Naive thymus-derived CD4-positive, alpha-beta T cell (primary cell): ENCODE measurements at regions of chr2 and their contacts with region 1.

Region 1: DNA sequence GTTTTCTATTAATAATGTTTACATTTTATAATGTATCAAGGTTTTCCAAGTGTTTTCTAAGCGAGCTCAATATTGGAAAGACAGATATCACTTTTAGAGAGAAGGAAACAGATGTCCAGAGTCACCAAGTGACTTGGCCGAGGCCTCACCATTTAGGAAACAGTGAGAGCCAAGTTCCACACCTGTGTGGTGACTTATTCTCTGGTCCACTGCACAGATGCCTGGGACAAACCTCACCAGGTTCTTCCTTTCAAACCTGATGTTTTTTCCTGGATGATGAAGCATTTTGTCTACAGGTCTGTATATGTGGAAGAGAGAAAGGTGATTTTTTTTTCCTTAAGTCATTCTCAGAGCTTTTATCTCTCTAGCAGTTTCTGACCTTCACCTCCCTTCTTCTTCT is 280.7 kb downstream of the LPIN1 start:
- DNase-seq: no peak
- ATAC-seq: no peak
- H3K4me3 ChIP-seq: no peak overlapping the region
- H3K4me3 Mint-ChIP-seq: no peak overlapping the region
- H3K27ac ChIP-seq: no peak overlapping the region
- H3K27ac Mint-ChIP-seq: no peak overlapping the region
- H3K4me1 ChIP-seq: no peaks in the 10 kb centered on the region
- H3K4me1 Mint-ChIP-seq: peaks cover 0 to 5% (median 2%) of the 10 kb centered on the region in 7 donors
- H3K27me3 ChIP-seq: no peaks in the 10 kb centered on the region
- H3K27me3 Mint-ChIP-seq: peaks cover 0 to 8% (median 0%) of the 10 kb centered on the region in 5 donors

Region 2: DNA sequence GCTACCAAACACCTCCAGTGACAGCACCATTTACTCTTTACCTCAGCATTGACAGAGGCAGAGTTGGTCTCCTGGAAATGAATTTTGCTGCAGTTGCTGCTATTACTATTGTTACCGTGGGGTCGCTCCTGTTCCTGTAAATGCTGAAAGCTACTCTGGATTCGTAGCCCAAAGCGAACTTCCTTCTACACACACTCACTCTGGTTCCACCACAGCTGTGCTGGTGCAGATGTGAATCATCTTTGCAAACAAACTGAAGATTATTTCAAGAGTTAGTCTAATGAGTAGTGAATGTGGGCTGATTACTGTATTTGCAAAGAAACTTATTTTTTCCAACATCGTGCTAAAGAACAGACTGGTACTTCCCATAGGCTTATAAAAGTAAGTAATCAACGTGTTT is 23.3 kb after region 1 on chr2:
- CTCF ChIA-PET with region 1: no interaction called
- POLR2A ChIA-PET with region 1: interaction called, 10 read pairs
- intact Hi-C with region 1: no loop called
- DNase-seq: peak in 1 of 9 donors; percentile 42
- ATAC-seq: peak; percentile 58
- H3K4me3 ChIP-seq: no peak overlapping the region
- H3K4me3 Mint-ChIP-seq: peak overlapping the region in 3 of 10 donors; percentile 4 to 64 (median 32)
- H3K27ac ChIP-seq: no peak overlapping the region
- H3K27ac Mint-ChIP-seq: peak overlapping the region in 2 of 9 donors; percentile 26 to 69
- H3K4me1 ChIP-seq: peaks cover 2 to 16% of the 10 kb centered on the region in 2 donors
- H3K4me1 Mint-ChIP-seq: peaks cover 2 to 63% (median 43%) of the 10 kb centered on the region in 7 donors
- H3K27me3 ChIP-seq: no peaks in the 10 kb centered on the region
- H3K27me3 Mint-ChIP-seq: peaks cover 0 to 19% (median 0%) of the 10 kb centered on the region in 5 donors